Esophagus muscularis mucosa (tissue), 4 donors: ENCODE measurements at regions of chr13 and their contacts with region 1.

Region 1: GRCh38 chr13:44050450-44051063 is 170.9 kb downstream of the LACC1 start:
- DNase-seq: no peak
- H3K4me3 ChIP-seq: no peak overlapping the region
- H3K27ac ChIP-seq: peak overlapping the region in 1 of 4 donors; percentile 46
- H3K4me1 ChIP-seq: peaks cover 8 to 35% (median 34%) of the 10 kb centered on the region in 4 donors
- H3K27me3 ChIP-seq: no peaks in the 10 kb centered on the region
- CTCF ChIP-seq: peak; percentile 81 to 86 (median 85)
- EP300 ChIP-seq: no peak
- POLR2A ChIP-seq: no peak

Region 2: DNA sequence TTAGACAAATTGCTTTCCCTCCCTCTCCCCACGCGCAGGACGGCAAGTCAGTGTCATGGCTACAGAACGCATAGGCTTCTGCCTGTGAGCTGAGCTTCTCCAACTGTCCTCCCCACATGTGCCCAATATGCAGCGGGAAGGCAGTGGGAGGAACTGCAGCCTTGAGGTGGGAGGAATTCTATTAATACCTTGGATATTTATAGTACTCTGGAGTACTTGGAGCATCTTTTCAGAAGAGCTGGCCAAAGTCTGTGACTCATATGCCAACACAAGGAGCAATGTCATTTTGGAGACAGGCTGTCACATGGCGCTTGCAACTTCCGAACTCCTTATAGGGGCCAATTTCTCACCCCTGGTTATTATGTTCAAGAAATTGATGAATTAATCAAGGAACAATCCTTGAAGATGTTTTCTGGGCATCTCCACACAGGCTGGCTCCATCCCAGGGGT is 78.0 kb after region 1 on chr13:
- intact Hi-C with region 1: loop called (anchors 5 kb)
- DNase-seq: no peak
- H3K4me3 ChIP-seq: no peak overlapping the region
- H3K27ac ChIP-seq: peak overlapping the region; percentile 54 to 66 (median 59)
- H3K4me1 ChIP-seq: peaks cover 3 to 16% (median 13%) of the 10 kb centered on the region in 4 donors
- H3K27me3 ChIP-seq: no peaks in the 10 kb centered on the region
- CTCF ChIP-seq: peak in 2 of 3 experiments; percentile 27 to 44
- EP300 ChIP-seq: no peak
- POLR2A ChIP-seq: no peak

Region 3: GRCh38 chr13:44237276-44237767 is 186.8 kb after region 1 on chr13:
- intact Hi-C with region 1: no loop called
- DNase-seq: no peak
- H3K4me3 ChIP-seq: no peak overlapping the region
- H3K27ac ChIP-seq: peak overlapping the region; percentile 67 to 80 (median 74)
- H3K4me1 ChIP-seq: peaks cover 28 to 38% (median 31%) of the 10 kb centered on the region in 4 donors
- H3K27me3 ChIP-seq: no peaks in the 10 kb centered on the region
- CTCF ChIP-seq: no peak
- EP300 ChIP-seq: peak; percentile 48
- POLR2A ChIP-seq: no peak

Region 4: DNA sequence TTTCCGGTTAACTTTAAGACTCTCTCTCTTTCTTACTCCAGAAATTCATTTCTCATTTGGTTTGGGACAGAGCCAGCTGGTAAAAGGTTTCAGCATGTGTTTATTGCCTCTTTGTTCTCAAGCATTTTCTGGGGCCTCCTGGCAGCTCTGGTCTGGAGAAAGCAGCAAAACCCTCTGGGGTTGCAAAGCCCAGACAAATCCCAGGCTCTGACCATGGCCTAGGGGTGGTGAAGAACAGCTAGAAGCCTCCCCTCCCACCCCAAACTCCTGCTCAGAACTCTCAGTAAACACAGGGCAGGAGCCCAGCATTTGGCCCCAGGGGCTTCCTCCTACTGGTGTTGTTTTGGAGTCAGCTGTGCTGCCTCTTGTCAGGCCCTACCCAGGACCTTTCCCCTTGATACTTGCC is 198.9 kb after region 1 on chr13:
- intact Hi-C with region 1: no loop called
- DNase-seq: no peak
- H3K4me3 ChIP-seq: no peak overlapping the region
- H3K27ac ChIP-seq: peak overlapping the region; percentile 66 to 80 (median 73)
- H3K4me1 ChIP-seq: peaks cover 18 to 37% (median 28%) of the 10 kb centered on the region in 4 donors
- H3K27me3 ChIP-seq: no peaks in the 10 kb centered on the region
- CTCF ChIP-seq: no peak
- EP300 ChIP-seq: no peak
- POLR2A ChIP-seq: no peak

Region 5: GRCh38 chr13:44312898-44313551 is 262.5 kb after region 1 on chr13:
- intact Hi-C with region 1: loop called (anchors 10 kb)
- DNase-seq: no peak
- H3K4me3 ChIP-seq: no peak overlapping the region
- H3K27ac ChIP-seq: peak overlapping the region in 1 of 4 donors; percentile 8
- H3K4me1 ChIP-seq: peaks cover 26 to 64% (median 56%) of the 10 kb centered on the region in 4 donors
- H3K27me3 ChIP-seq: no peaks in the 10 kb centered on the region
- CTCF ChIP-seq: no peak
- EP300 ChIP-seq: no peak
- POLR2A ChIP-seq: no peak